ENCODE measurements at regions of chr3 and their contacts with region 1.

Region 1: DNA sequence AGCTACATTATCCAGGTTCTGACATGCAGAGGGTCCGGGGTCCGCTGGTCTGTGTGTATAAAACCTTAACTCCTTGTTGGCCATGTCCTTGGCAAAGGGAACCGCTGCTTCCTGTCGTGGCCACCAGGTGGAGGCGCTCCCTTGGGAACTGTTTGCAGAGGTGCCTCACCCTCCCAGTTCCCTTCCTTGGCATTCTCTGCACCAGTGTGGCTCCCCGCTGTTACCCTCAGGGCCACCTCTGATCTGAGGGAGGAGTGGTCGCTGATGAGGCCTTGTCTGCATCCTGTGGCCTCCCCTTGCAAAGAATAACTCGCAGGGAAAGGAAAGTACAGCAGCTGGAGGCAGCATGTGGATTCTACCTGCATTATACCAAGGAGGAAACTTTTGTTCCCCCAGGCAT is 89.6 kb downstream of the CHRD start:
- H3K4me3 ChIP-seq: no peak overlapping the region
- H3K27ac ChIP-seq: no peak overlapping the region
- H3K4me1 ChIP-seq: no peaks in the 10 kb centered on the region
- CTCF ChIP-seq: 0 out of 2 replicates have a peak, but pooled peaks have one; percentile 38

Region 2: GRCh38 chr3:184371570-184372018 is 97.8 kb before region 1 on chr3:
- CTCF ChIA-PET with region 1: interaction called, 55 read pairs
- POLR2A ChIA-PET with region 1: interaction called, 10 read pairs
- H3K4me3 ChIP-seq: no peak overlapping the region
- H3K27ac ChIP-seq: no peak overlapping the region
- H3K4me1 ChIP-seq: no peaks in the 10 kb centered on the region
- CTCF ChIP-seq: peak; percentile 86

Region 3: DNA sequence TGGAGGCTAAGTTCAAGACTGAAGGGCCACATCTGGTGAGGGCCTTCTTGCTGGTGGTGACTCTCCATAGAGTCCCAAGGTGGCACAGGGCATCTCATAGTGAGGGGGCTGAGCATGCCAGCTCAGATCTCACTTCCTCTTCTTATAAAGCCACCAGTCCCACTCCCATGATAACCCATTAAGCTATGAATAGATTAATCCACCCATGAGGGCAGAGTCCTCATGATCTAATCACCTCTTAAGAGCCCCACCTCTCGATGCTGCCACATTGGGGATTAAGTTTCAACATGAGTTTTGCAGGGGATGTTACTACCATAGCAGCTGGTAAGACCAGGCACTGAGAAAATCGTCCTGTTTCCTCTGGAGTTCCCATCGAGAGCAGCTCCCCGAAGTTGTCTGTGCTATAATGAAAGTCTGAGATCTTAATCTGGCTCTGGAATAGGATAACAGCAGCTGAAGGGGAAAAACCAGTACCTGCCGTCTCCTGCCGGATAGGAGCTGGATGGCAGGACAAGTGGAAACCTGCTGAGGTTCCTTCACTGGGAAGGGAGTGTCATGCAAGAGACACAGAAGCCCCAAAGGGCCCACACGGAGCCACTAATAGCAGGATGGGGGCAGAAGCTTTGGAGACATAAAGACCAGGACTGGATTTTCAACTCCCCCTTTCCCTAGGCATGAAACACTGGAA is 12.7 kb after region 1 on chr3:
- CTCF ChIA-PET with region 1: interaction called, 21 read pairs
- POLR2A ChIA-PET with region 1: no interaction called
- H3K4me3 ChIP-seq: no peak overlapping the region
- H3K27ac ChIP-seq: no peak overlapping the region
- H3K4me1 ChIP-seq: peaks cover 7% of the 10 kb centered on the region
- CTCF ChIP-seq: no peak

Region 4: GRCh38 chr3:184592371-184593219 is 123.2 kb after region 1 on chr3:
- CTCF ChIA-PET with region 1: no interaction called
- POLR2A ChIA-PET with region 1: no interaction called
- H3K4me3 ChIP-seq: no peak overlapping the region
- H3K27ac ChIP-seq: no peak overlapping the region
- H3K4me1 ChIP-seq: no peaks in the 10 kb centered on the region
- CTCF ChIP-seq: no peak